Activated naive CD4-positive, alpha-beta T cell treated with anti-CD3 and anti-CD28 coated beads for 36 hours (primary cell): ENCODE measurements at regions of chr19 and their contacts with region 1.

Region 1: GRCh38 chr19:16338470-16339360 is 14.1 kb downstream of the KLF2 start:
- DNase-seq: peak; percentile 89
- H3K4me3 Mint-ChIP-seq: peak overlapping the region; percentile 63
- H3K27ac Mint-ChIP-seq: peak overlapping the region; percentile 30
- H3K4me1 Mint-ChIP-seq: peaks cover 61% of the 10 kb centered on the region
- H3K27me3 Mint-ChIP-seq: peaks cover 3% of the 10 kb centered on the region

Region 2: DNA sequence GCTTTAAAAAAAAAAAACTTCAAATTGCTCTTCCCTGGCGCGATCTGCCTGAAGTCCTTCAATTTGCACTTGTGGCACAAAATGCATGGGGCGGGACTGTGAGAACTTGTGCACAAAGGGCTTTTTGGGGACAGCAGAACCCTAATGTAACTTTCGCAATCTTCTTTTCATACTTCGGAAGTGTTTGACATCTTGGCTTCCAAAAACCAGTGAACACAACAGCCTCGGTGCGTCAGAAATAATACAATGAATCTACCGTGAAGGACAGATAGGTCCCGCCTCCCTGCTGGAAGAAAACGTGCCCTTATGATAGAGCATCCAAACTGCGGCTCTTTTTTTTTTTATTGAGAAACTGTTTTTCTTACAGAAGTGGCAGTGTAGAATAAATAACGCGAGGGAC is 22.5 kb after region 1 on chr19:
- CTCF ChIA-PET with region 1: no interaction called
- intact Hi-C with region 1: loop called (anchors 2 kb)
- DNase-seq: no peak
- H3K4me3 Mint-ChIP-seq: no peak overlapping the region
- H3K27ac Mint-ChIP-seq: no peak overlapping the region
- H3K4me1 Mint-ChIP-seq: peaks cover 85% of the 10 kb centered on the region
- H3K27me3 Mint-ChIP-seq: peaks cover 6% of the 10 kb centered on the region

Region 3: DNA sequence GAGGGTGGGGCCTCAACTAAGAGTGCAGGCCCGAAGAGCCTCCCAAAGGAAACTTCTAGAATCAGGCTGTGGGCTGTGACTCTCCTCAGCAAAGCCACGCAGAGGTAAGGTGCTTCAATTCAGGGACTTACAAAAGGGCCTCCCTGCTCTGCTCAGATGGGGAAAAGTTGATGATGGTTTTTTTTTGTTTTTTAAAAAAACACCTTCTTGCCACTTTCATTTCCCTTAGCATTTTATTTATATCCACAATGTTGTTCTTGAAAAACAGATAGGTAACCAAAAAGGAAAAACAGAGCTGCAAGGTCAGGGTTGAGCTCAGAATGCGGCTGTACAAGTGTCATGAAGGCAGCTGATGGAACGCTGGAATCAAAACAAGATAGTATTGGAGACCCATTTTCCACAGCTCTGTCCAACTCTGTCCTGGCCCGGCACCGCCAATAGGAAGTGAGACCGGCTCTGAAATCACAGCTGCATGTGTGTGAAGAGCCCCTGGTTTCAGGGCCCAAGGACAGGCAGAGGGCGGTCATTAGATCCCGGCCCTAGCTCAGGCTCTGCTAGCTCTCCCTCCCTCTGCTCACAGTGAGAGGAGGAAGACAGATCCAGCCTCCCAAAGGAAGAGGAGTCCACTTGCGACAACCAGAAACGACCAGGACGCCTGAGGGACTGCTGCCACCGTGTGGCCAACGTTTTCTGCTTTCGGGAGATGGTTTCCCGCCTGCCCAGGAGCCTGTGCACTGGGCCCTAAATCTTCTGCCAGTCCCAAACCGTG is 44.2 kb after region 1 on chr19:
- CTCF ChIA-PET with region 1: interaction called, 11 read pairs
- intact Hi-C with region 1: no loop called
- DNase-seq: peak; percentile 89
- H3K4me3 Mint-ChIP-seq: no peak overlapping the region
- H3K27ac Mint-ChIP-seq: no peak overlapping the region
- H3K4me1 Mint-ChIP-seq: peaks cover 45% of the 10 kb centered on the region
- H3K27me3 Mint-ChIP-seq: no peaks in the 10 kb centered on the region

Region 4: GRCh38 chr19:16660763-16661479 is 322.2 kb after region 1 on chr19 and contains the start of gene TMEM38A:
- CTCF ChIA-PET with region 1: no interaction called
- intact Hi-C with region 1: no loop called
- DNase-seq: peak; percentile 23
- H3K4me3 Mint-ChIP-seq: peak within 1 kb of the TSS; percentile 92
- H3K27ac Mint-ChIP-seq: peak within 1 kb of the TSS; percentile 92
- H3K4me1 Mint-ChIP-seq: peaks cover 39% of the 10 kb centered on the region
- H3K27me3 Mint-ChIP-seq: peaks cover 6% of the 10 kb centered on the region
- total RNA-seq, gene TMEM38A: 0.49 to 0.83 TPM